Thyroid gland (tissue), 4 donors: ENCODE measurements at regions of chr11 and their contacts with region 1.

Region 1: GRCh38 chr11:1515082-1516060 is 28.8 kb upstream of the MOB2 start:
- DNase-seq: peak; percentile 91 to 93
- H3K4me3 ChIP-seq: no peak overlapping the region
- H3K27ac ChIP-seq: peak overlapping the region; percentile 22 to 81 (median 44)
- H3K4me1 ChIP-seq: peaks cover 32 to 46% of the 10 kb centered on the region in 2 donors
- H3K27me3 ChIP-seq: no peaks in the 10 kb centered on the region
- CTCF ChIP-seq: peak; percentile 87 to 98 (median 93)
- POLR2A ChIP-seq: peak in 1 of 2 donors; percentile 15

Region 2: GRCh38 chr11:1202776-1203504 is 312.4 kb before region 1 on chr11:
- intact Hi-C with region 1: loop called (anchors 2 kb)
- DNase-seq: peak; percentile 48 to 51
- H3K4me3 ChIP-seq: no peak overlapping the region
- H3K27ac ChIP-seq: no peak overlapping the region
- H3K4me1 ChIP-seq: no peaks in the 10 kb centered on the region
- H3K27me3 ChIP-seq: no peaks in the 10 kb centered on the region
- CTCF ChIP-seq: peak; percentile 62 to 97 (median 76)
- POLR2A ChIP-seq: no peak

Region 3: DNA sequence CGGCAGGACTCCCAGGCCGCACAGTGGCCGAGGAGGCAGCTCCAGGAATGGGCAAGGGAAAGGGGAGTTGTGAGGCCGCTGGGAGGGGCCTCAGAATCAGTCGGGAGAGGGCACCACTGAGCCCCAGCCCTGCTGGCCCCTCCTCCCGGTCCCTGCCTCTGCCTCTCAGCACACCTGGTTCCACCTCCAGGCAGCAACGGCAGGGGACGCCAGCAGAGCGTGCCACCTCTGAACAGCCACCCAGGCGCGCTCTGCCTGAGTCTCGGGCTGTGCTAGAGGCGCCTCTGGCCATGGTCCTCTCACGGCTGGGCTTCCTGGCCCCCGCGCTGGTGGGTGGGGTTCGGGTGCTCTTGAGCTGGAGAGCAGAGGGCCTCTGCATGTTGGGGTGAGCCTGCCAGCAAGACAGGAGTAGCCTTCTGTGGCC is 61.7 kb before region 1 on chr11:
- intact Hi-C with region 1: loop called (anchors 2 kb)
- DNase-seq: peak; percentile 81 to 82
- H3K4me3 ChIP-seq: no peak overlapping the region
- H3K27ac ChIP-seq: peak overlapping the region in 1 of 3 donors; percentile 2
- H3K4me1 ChIP-seq: peaks cover 12 to 34% of the 10 kb centered on the region in 2 donors
- H3K27me3 ChIP-seq: no peaks in the 10 kb centered on the region
- CTCF ChIP-seq: peak; percentile 29 to 98 (median 74)
- POLR2A ChIP-seq: no peak

Region 4: GRCh38 chr11:1482581-1483444 is 32.6 kb before region 1 on chr11:
- intact Hi-C with region 1: loop called (anchors 5 kb)
- DNase-seq: peak in 1 of 2 donors; percentile 24
- H3K4me3 ChIP-seq: no peak overlapping the region
- H3K27ac ChIP-seq: peak overlapping the region in 2 of 3 donors; percentile 51 to 55
- H3K4me1 ChIP-seq: peaks cover 58 to 80% of the 10 kb centered on the region in 2 donors
- H3K27me3 ChIP-seq: no peaks in the 10 kb centered on the region
- CTCF ChIP-seq: no peak
- POLR2A ChIP-seq: no peak